Posterior vena cava (tissue), 2 donors: ENCODE measurements at regions of chr4 and their contacts with region 1.

Region 1: GRCh38 chr4:2101346-2102044 is 42.4 kb downstream of the NAT8L start:
- DNase-seq: no peak

Region 2: GRCh38 chr4:2073808-2074481 is 27.6 kb before region 1 on chr4:
- intact Hi-C with region 1: loop called in 1 of 2 experiments (anchors 1 kb)
- DNase-seq: peak; percentile 73